ENCODE measurements at regions of chr21 and their contacts with region 1.

Region 1: GRCh38 chr21:42233067-42233961 is 14.4 kb downstream of the ABCG1 start:
- DNase-seq: peak; percentile 52 to 90 (median 78)
- ATAC-seq: peak; percentile 70
- H3K4me3 ChIP-seq: peak overlapping the region; percentile 59
- H3K4me3 Mint-ChIP-seq: peak overlapping the region; percentile 72 to 86 (median 78)
- H3K27ac ChIP-seq: peak overlapping the region; percentile 92
- H3K27ac Mint-ChIP-seq: peak overlapping the region; percentile 70 to 96 (median 91)
- H3K4me1 ChIP-seq: peaks cover 82 to 86% of the 10 kb centered on the region in 2 donors
- H3K4me1 Mint-ChIP-seq: peaks cover 59 to 100% (median 92%) of the 10 kb centered on the region in 7 donors
- H3K27me3 ChIP-seq: no peaks in the 10 kb centered on the region
- H3K27me3 Mint-ChIP-seq: no peaks in the 10 kb centered on the region

Region 2: GRCh38 chr21:41715649-41716281 is 517.5 kb before region 1 on chr21:
- CTCF ChIA-PET with region 1: no interaction called
- POLR2A ChIA-PET with region 1: no interaction called
- intact Hi-C with region 1: no loop called
- DNase-seq: no peak
- ATAC-seq: no peak
- H3K4me3 ChIP-seq: no peak overlapping the region
- H3K4me3 Mint-ChIP-seq: no peak overlapping the region
- H3K27ac ChIP-seq: no peak overlapping the region
- H3K27ac Mint-ChIP-seq: no peak overlapping the region
- H3K4me1 ChIP-seq: no peaks in the 10 kb centered on the region
- H3K4me1 Mint-ChIP-seq: peaks cover 0 to 4% (median 0%) of the 10 kb centered on the region in 7 donors
- H3K27me3 ChIP-seq: no peaks in the 10 kb centered on the region
- H3K27me3 Mint-ChIP-seq: peaks cover 23 to 48% (median 39%) of the 10 kb centered on the region in 5 donors

Region 3: GRCh38 chr21:42062236-42063022 is 170.9 kb before region 1 on chr21:
- CTCF ChIA-PET with region 1: no interaction called
- POLR2A ChIA-PET with region 1: no interaction called
- intact Hi-C with region 1: loop called (anchors 2 to 10 kb)
- DNase-seq: peak; percentile 63 to 99 (median 97)
- ATAC-seq: peak; percentile 91
- H3K4me3 ChIP-seq: peak overlapping the region; percentile 64
- H3K4me3 Mint-ChIP-seq: peak overlapping the region; percentile 85 to 95 (median 92)
- H3K27ac ChIP-seq: peak overlapping the region; percentile 85
- H3K27ac Mint-ChIP-seq: peak overlapping the region; percentile 94 to 100 (median 99)
- H3K4me1 ChIP-seq: peaks cover 20 to 32% of the 10 kb centered on the region in 2 donors
- H3K4me1 Mint-ChIP-seq: peaks cover 28 to 76% (median 55%) of the 10 kb centered on the region in 7 donors
- H3K27me3 ChIP-seq: no peaks in the 10 kb centered on the region
- H3K27me3 Mint-ChIP-seq: peaks cover 0 to 5% (median 0%) of the 10 kb centered on the region in 5 donors

Region 4: GRCh38 chr21:42193131-42193671 is 40.1 kb before region 1 on chr21:
- CTCF ChIA-PET with region 1: interaction called, 3 read pairs
- POLR2A ChIA-PET with region 1: interaction called, 15 read pairs
- intact Hi-C with region 1: loop called (anchors 1 kb)
- DNase-seq: peak in 8 of 9 donors; percentile 40 to 73 (median 48)
- ATAC-seq: peak; percentile 45
- H3K4me3 ChIP-seq: no peak overlapping the region
- H3K4me3 Mint-ChIP-seq: peak overlapping the region; percentile 26 to 78 (median 54)
- H3K27ac ChIP-seq: no peak overlapping the region
- H3K27ac Mint-ChIP-seq: peak overlapping the region; percentile 71 to 90 (median 79)
- H3K4me1 ChIP-seq: peaks cover 55 to 56% of the 10 kb centered on the region in 2 donors
- H3K4me1 Mint-ChIP-seq: peaks cover 54 to 90% (median 77%) of the 10 kb centered on the region in 7 donors
- H3K27me3 ChIP-seq: no peaks in the 10 kb centered on the region
- H3K27me3 Mint-ChIP-seq: peaks cover 0 to 10% (median 0%) of the 10 kb centered on the region in 5 donors

Region 5: DNA sequence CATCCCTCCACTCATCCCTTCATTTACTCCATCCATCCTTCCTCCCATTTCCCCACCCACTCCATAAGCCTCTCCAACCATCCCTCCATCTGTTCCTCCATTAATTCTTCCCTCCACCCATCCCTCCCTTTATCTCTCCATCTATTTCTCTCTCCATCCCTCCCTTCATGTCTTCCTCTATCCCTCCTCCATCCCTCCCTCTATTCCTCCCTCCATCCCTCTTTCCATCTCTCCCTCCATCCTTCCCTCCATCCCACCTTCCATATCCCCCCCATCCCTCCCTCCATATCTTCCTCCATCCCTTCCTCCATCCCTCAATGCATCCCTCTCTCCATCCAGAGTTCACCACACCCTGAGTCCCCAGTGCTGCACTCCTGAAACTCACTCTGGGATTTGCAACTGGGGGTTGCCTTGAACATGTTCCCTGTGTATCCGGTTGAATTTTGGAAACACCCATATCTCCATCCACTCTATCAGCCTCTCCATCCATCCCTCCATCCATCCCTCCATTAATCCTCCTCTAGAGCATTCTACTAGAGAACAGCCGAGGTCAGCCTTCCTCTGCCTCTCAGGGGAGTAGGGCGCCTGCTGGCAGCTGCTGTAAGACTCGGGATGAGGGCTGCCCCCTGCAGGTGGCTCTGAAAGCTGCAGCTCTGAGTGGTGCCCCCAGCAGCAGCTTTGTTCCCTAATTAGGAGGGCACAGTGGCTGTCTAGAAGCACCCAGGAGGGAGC is 25.0 kb after region 1 on chr21:
- CTCF ChIA-PET with region 1: interaction called, 39 read pairs
- POLR2A ChIA-PET with region 1: interaction called, 4 read pairs
- intact Hi-C with region 1: loop called (anchors 1 to 2 kb)
- DNase-seq: peak; percentile 66 to 87 (median 77)
- ATAC-seq: peak; percentile 94
- H3K4me3 ChIP-seq: no peak overlapping the region
- H3K4me3 Mint-ChIP-seq: no peak overlapping the region
- H3K27ac ChIP-seq: no peak overlapping the region
- H3K27ac Mint-ChIP-seq: peak overlapping the region in 4 of 9 donors; percentile 12 to 59 (median 45)
- H3K4me1 ChIP-seq: no peaks in the 10 kb centered on the region
- H3K4me1 Mint-ChIP-seq: peaks cover 20 to 46% (median 35%) of the 10 kb centered on the region in 7 donors
- H3K27me3 ChIP-seq: no peaks in the 10 kb centered on the region
- H3K27me3 Mint-ChIP-seq: peaks cover 0 to 5% (median 0%) of the 10 kb centered on the region in 5 donors

Region 6: DNA sequence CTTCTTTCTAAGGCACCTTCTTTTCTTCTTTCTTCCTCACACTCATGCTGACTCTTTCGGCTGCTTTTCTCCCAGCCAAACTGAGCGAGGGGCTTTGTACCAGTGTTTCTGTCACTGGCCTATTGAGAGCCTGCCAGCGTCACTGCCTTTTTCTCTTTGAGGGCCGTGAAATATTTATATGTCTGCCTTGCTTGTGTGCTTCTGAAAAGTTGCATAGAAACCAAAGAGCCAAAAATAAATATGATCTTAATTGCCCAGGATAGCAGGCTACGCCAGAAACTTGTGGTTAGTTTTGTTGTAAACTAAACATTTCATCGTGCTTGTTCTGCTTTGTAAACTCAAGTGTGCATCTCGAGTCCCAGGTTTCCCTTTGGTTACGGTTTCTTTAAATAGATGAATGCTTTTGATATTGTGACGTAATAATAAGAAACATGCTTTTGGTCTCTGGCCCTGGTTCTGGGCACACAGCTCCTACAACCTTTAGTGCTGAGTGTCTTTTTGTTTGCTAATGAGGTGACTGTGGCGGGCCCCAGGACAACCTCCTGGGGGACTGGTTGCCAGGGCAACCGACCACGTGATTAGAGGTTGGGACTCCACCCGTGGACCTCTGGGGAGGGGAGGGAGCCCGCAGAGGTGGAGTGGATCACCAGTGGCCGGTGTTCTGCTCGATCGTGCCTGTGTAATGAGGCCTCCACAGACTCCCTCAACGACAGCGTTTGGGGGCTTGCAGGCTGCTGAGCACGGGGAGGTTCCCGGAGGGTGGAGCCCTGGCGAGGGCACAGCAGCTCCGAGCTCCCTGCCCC is 291.2 kb after region 1 on chr21:
- CTCF ChIA-PET with region 1: no interaction called
- POLR2A ChIA-PET with region 1: no interaction called
- intact Hi-C with region 1: loop called in 1 of 2 experiments (anchors 2 kb)
- DNase-seq: peak in 3 of 9 donors; percentile 10 to 25 (median 20)
- ATAC-seq: peak; percentile 60
- H3K4me3 ChIP-seq: no peak overlapping the region
- H3K4me3 Mint-ChIP-seq: peak overlapping the region in 7 of 10 donors; percentile 20 to 52 (median 43)
- H3K27ac ChIP-seq: no peak overlapping the region
- H3K27ac Mint-ChIP-seq: peak overlapping the region in 8 of 9 donors; percentile 6 to 88 (median 56)
- H3K4me1 ChIP-seq: peaks cover 16 to 30% of the 10 kb centered on the region in 2 donors
- H3K4me1 Mint-ChIP-seq: peaks cover 39 to 64% (median 54%) of the 10 kb centered on the region in 7 donors
- H3K27me3 ChIP-seq: no peaks in the 10 kb centered on the region
- H3K27me3 Mint-ChIP-seq: no peaks in the 10 kb centered on the region